Activated T-helper 1 cell treated with anti-CD3 and anti-CD28 coated beads, Interleukin-12 subunit alpha, Interleukin-12 subunit beta, Interleukin-2, Interleukin-4 antibody, amounts not matched to agents 30 ng/mL and 10 ng/mL and 1 ng/mL, durations not matched to agents 14 hours and 24 hours and 36 hours (primary cell): ENCODE measurements at regions of chr12 and their contacts with region 1.

Region 1: GRCh38 chr12:62466594-62467491 is at the start of gene MON2:
- DNase-seq: peak; percentile 86
- H3K4me3 Mint-ChIP-seq: peak within 1 kb of the TSS; percentile 91
- H3K27ac Mint-ChIP-seq: peak within 1 kb of the TSS; percentile 92
- H3K4me1 Mint-ChIP-seq: peaks cover 28% of the 10 kb centered on the region
- H3K27me3 Mint-ChIP-seq: no peaks in the 10 kb centered on the region
- total RNA-seq, gene MON2: 33.1 and 40.8 TPM in 2 replicates

Region 2: DNA sequence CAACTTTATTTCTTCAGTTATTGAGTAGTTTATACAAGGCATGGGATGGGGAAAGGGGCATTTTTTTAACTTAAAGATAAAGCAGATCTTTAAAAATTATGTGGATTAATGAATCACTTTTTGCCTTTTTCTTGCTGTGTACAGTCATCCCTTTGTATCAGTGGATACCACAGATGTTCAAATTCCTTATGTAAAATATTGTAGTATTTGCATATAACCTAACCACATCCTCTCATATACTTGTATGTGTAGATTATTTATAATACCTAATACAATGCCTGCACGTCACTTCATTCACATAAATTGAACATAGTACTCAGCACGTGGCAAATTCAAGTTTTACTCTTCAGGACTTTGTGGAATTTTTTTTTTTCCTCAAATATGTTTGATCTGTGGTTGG is 66.7 kb before region 1 on chr12:
- intact Hi-C with region 1: loop called (anchors 2 kb)
- DNase-seq: no peak
- H3K4me3 Mint-ChIP-seq: no peak overlapping the region
- H3K27ac Mint-ChIP-seq: no peak overlapping the region
- H3K4me1 Mint-ChIP-seq: peaks cover 15% of the 10 kb centered on the region
- H3K27me3 Mint-ChIP-seq: no peaks in the 10 kb centered on the region